ENCODE measurements at regions of chr3 and their contacts with region 1.

Region 1: DNA sequence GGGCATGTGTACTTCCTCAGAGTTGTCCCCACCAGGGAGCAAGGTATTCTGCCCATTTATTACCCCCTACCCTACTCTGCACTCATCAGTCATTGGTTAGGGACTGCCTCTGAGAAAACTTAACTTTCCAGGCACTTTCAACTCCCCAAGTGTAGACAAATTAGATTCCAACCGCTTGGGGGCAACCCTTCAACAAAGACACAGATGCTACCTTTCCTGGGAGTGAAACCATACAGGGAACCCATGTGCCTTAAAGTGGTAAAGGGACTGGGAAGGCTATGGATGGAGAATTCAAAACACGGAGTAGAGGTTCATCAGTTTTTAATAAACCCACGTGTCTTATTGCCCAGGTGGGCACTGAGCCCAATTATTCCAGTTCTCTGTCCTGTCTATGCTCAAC is 19.4 kb upstream of the UBE2E2 start:
- DNase-seq: peak; percentile 58
- H3K4me3 Mint-ChIP-seq: no peak overlapping the region
- H3K27ac Mint-ChIP-seq: no peak overlapping the region
- H3K4me1 Mint-ChIP-seq: no peaks in the 10 kb centered on the region
- H3K27me3 Mint-ChIP-seq: peaks cover 29% of the 10 kb centered on the region
- CTCF ChIP-seq: no peak

Region 2: GRCh38 chr3:23761440-23761896 is 577.7 kb after region 1 on chr3:
- CTCF ChIA-PET with region 1: no interaction called
- intact Hi-C with region 1: loop called (anchors 5 kb)
- DNase-seq: peak; percentile 44
- H3K4me3 Mint-ChIP-seq: no peak overlapping the region
- H3K27ac Mint-ChIP-seq: no peak overlapping the region
- H3K4me1 Mint-ChIP-seq: no peaks in the 10 kb centered on the region
- H3K27me3 Mint-ChIP-seq: no peaks in the 10 kb centered on the region
- CTCF ChIP-seq: no peak

Region 3: GRCh38 chr3:23805633-23806533 is 622.1 kb after region 1 on chr3 and contains the start of gene UBE2E1:
- CTCF ChIA-PET with region 1: no interaction called
- intact Hi-C with region 1: loop called (anchors 10 kb)
- DNase-seq: peak; percentile 54
- H3K4me3 Mint-ChIP-seq: peak within 1 kb of the TSS; percentile 85
- H3K27ac Mint-ChIP-seq: peak within 1 kb of the TSS; percentile 88
- H3K4me1 Mint-ChIP-seq: peaks cover 41% of the 10 kb centered on the region
- H3K27me3 Mint-ChIP-seq: no peaks in the 10 kb centered on the region
- CTCF ChIP-seq: no peak
- total RNA-seq, gene UBE2E1: 68.9 and 74.3 TPM in 2 replicates

Measured in Calu3 (cell line).